ENCODE measurements at regions of chr20 and their contacts with region 1.

Region 1: DNA sequence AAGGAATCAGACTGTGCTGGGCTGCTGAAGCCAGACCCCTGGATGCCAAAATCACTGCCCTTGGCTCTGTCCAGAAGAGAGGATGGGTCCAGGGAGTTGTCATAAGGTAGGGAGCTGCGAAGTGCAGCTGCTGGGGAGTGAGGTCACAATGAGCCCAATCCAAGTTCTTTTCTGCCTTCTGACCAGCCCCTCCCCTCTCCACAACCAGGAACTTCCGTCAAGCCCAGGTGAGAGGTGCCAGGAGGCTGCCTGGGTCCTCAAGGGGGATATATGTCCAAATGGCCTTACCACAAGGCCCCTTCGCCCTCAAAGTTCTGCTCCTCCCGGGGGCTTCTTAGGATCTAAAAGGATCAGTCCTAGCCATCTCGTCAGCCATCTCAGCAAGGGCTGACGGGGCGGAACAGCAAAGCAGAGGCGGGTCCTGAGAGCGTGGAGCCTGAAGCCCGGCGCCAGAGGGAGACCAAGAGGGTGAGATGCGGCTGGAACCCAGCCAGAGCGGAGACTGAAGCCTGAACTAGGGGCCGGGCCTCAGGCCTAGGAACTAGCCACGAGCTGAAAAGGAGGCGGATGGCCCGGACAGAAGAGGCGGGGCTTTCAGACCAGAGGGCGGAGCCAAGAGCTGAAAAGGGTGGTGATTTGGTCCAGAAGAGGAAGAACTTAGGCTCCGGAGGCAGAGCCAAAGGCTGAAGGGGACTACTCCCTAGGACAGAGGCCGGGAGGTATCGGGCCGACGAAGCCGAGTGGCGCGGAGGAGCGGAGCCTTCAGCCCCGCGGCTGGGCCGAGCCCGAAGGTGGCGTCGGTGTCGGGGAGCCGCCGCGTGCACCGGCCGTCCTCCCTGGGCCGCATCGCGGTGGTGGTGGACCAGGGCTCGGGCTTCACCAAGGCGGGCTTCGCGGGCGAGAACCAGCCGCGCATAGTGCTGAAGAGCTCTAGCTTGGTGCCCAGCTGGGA is at the start of gene ACTL10:
- DNase-seq: peak; percentile 88
- H3K4me3 Mint-ChIP-seq: peak within 1 kb of the TSS; percentile 93
- H3K27ac Mint-ChIP-seq: peak within 1 kb of the TSS; percentile 95
- H3K4me1 Mint-ChIP-seq: peaks cover 65% of the 10 kb centered on the region
- H3K27me3 Mint-ChIP-seq: no peaks in the 10 kb centered on the region

Region 2: GRCh38 chr20:33450867-33451266 is 215.7 kb before region 1 on chr20:
- CTCF ChIA-PET with region 1: interaction called, 16 read pairs
- DNase-seq: no peak
- H3K4me3 Mint-ChIP-seq: no peak overlapping the region
- H3K27ac Mint-ChIP-seq: no peak overlapping the region
- H3K4me1 Mint-ChIP-seq: peaks cover 9% of the 10 kb centered on the region
- H3K27me3 Mint-ChIP-seq: no peaks in the 10 kb centered on the region

Region 3: GRCh38 chr20:33460711-33461110 is 205.9 kb before region 1 on chr20:
- CTCF ChIA-PET with region 1: interaction called, 16 read pairs
- DNase-seq: no peak
- H3K4me3 Mint-ChIP-seq: no peak overlapping the region
- H3K27ac Mint-ChIP-seq: no peak overlapping the region
- H3K4me1 Mint-ChIP-seq: peaks cover 8% of the 10 kb centered on the region
- H3K27me3 Mint-ChIP-seq: peaks cover 14% of the 10 kb centered on the region

Region 4: DNA sequence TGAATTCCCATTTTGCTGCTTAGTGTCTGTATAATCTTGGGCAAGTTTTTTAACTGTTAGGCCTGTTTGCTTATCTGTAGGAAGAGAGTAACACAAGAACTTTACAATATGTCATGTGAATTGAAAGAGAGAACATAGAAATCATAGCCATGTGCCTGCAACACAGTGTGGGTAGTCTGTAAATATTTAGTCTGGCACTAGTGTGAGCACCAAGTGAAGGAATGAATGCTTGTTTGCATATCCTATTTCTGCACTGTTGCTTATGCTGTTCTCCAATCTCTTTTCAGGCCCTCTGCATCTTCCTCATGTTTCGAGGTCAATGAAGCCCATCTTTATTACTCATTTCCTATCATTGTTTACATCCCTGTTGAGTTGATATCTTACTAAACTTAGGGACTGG is 127.4 kb before region 1 on chr20:
- CTCF ChIA-PET with region 1: no interaction called
- DNase-seq: no peak
- H3K4me3 Mint-ChIP-seq: no peak overlapping the region
- H3K27ac Mint-ChIP-seq: no peak overlapping the region
- H3K4me1 Mint-ChIP-seq: no peaks in the 10 kb centered on the region
- H3K27me3 Mint-ChIP-seq: no peaks in the 10 kb centered on the region

Region 5: GRCh38 chr20:33653218-33653899 is 13.2 kb before region 1 on chr20:
- CTCF ChIA-PET with region 1: interaction called, 22 read pairs
- DNase-seq: peak; percentile 64
- H3K4me3 Mint-ChIP-seq: no peak overlapping the region
- H3K27ac Mint-ChIP-seq: no peak overlapping the region
- H3K4me1 Mint-ChIP-seq: peaks cover 7% of the 10 kb centered on the region
- H3K27me3 Mint-ChIP-seq: peaks cover 5% of the 10 kb centered on the region

Region 6: DNA sequence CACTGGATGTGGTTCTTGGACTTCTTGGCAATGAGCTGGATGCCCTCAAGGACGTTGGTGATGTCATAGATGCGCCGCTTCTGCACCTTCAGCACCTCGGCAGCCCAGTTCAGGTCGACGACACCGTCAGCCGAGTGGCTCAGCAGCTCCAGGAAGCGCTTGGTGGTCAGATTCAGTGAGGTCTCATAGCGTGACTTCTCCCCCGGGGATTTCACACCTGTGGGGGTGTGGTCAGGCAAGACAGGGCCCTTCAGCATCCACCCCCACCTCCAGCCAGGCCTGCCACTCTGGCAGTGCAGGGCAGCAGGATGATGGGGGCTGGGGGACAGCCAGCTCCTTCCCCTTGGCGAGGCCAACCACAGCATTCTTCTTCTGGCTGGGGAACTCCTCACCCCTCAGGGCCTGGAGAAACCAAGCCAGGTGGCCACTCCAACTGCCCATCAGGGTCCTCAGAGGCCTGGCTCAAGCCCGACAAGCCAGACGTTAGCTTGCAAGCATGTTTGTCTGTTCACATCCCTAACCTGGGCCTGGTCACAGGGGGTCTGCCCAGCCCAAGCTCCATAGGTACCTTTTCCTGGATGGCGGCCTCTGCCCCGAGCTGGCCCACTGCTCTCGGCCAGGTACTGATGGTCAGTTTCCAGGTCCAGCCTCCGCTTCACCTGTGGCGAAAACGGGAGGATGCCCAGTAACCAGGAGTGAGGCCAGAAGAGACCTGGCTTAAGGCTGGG is 13.4 kb after region 1 on chr20:
- CTCF ChIA-PET with region 1: interaction called, 43 read pairs
- DNase-seq: peak; percentile 68
- H3K4me3 Mint-ChIP-seq: peak overlapping the region; percentile 47
- H3K27ac Mint-ChIP-seq: peak overlapping the region; percentile 95
- H3K4me1 Mint-ChIP-seq: peaks cover 90% of the 10 kb centered on the region
- H3K27me3 Mint-ChIP-seq: no peaks in the 10 kb centered on the region

Region 7: GRCh38 chr20:33697129-33697528 is 30.6 kb after region 1 on chr20:
- CTCF ChIA-PET with region 1: no interaction called
- DNase-seq: no peak
- H3K4me3 Mint-ChIP-seq: no peak overlapping the region
- H3K27ac Mint-ChIP-seq: no peak overlapping the region
- H3K4me1 Mint-ChIP-seq: peaks cover 3% of the 10 kb centered on the region
- H3K27me3 Mint-ChIP-seq: peaks cover 10% of the 10 kb centered on the region